K562 (cell line): ENCODE measurements at regions of chr12 and their contacts with region 1.

Region 1: DNA sequence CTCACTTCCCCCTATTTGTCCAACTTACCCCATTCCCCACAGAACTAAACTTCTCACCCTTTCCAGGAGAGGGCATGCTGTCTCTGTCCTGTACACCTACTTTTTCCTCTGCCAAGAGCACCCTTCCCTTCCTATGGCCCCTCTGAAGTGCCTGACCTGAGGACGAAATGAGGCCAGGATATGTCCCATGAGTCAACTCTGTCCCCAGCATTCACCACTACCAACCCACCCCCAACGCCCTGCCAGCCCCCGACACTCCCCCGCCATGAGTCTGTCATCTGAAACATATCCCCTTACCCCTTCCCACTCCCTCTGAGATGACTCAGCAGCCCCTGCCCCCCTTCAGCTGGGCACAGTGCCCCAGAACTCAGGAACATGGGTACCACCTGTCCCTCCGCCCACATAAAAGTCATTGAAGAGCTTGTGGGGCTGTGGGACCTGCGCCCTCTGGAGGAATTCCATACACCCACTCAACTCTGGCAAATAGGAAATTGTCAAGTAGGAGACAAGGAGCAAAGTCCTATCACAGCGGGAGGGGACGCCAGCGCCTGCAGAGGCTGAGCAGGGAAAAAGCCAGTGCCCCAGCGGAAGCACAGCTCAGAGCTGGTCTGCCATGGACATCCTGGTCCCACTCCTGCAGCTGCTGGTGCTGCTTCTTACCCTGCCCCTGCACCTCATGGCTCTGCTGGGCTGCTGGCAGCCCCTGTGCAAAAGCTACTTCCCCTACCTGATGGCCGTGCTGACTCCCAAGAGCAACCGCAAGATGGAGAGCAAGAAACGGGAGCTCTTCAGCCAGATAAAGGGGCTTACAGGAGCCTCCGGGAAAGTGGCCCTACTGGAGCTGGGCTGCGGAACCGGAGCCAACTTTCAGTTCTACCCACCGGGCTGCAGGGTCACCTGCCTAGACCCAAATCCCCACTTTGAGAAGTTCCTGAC is 26.3 kb downstream of the ITGA7 start:
- DNase-seq: peak in 3 of 4 experiments; percentile 20 to 71 (median 56)
- ATAC-seq: peak; percentile 84
- H3K4me3 ChIP-seq: peak overlapping the region; percentile 29
- H3K27ac ChIP-seq: no peak overlapping the region; the same call in 2 of the 3 replicates
- H3K4me1 ChIP-seq: peaks cover 0 to 11% of the 10 kb centered on the region in 2 experiments; a peak in 2 of 5 replicates
- H3K27me3 ChIP-seq: peaks cover 29 to 50% of the 10 kb centered on the region in 2 experiments
- CTCF ChIP-seq: peak; percentile 55 to 80 (median 64)
- EP300 ChIP-seq: no peak
- POLR2A ChIP-seq: no peak
- RAD21 ChIP-seq: peak in 1 of 2 experiments; percentile 22; a peak in 3 of 4 replicates

Region 2: DNA sequence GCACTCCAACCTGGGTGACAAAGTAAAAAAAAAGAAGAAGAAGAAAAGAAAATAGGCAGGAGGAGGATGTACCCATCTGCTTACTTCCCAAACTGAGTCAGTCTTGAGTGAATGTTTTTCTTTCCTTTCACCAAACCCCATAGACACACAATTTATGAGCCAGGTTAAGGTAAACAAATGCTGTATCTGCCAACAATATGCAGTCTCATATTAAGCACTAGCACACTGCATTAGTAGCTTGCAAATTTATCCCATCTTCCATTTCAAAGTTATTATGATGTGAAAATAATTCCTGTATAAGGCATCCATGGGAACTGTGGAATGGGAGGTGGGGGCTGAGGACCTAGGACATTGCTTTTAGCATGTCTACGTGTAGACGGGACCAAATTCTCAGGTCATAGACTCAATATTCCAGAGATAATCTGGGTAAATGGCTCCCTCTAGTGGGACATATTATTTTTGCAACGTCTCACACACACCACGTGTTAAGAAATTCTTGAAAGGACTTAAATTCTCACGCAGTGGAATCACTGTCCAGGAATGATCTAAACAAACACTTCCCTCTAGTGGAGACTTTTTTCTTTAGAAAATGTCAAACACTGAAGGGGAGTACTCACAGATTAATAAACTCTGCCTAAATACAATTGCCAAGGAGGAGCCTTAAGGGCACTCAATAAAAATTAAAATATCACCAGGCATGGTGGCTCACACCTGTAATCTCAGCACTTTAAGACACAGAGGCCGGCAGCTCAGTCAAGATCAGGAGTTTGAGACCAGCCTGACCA is 61.9 kb before region 1 on chr12:
- CTCF ChIA-PET with region 1: no interaction called
- POLR2A ChIA-PET with region 1: no interaction called
- in situ Hi-C with region 1: no loop called
- intact Hi-C with region 1: no loop called
- DNase-seq: peak; percentile 66 to 88 (median 70)
- ATAC-seq: peak; percentile 99
- H3K4me3 ChIP-seq: no peak overlapping the region
- H3K27ac ChIP-seq: no peak overlapping the region
- H3K4me1 ChIP-seq: no peaks in the 10 kb centered on the region
- H3K27me3 ChIP-seq: no peaks in the 10 kb centered on the region
- CTCF ChIP-seq: peak; percentile 81 to 98 (median 83)
- EP300 ChIP-seq: no peak
- POLR2A ChIP-seq: no peak
- RAD21 ChIP-seq: peak; percentile 96 to 98

Region 3: DNA sequence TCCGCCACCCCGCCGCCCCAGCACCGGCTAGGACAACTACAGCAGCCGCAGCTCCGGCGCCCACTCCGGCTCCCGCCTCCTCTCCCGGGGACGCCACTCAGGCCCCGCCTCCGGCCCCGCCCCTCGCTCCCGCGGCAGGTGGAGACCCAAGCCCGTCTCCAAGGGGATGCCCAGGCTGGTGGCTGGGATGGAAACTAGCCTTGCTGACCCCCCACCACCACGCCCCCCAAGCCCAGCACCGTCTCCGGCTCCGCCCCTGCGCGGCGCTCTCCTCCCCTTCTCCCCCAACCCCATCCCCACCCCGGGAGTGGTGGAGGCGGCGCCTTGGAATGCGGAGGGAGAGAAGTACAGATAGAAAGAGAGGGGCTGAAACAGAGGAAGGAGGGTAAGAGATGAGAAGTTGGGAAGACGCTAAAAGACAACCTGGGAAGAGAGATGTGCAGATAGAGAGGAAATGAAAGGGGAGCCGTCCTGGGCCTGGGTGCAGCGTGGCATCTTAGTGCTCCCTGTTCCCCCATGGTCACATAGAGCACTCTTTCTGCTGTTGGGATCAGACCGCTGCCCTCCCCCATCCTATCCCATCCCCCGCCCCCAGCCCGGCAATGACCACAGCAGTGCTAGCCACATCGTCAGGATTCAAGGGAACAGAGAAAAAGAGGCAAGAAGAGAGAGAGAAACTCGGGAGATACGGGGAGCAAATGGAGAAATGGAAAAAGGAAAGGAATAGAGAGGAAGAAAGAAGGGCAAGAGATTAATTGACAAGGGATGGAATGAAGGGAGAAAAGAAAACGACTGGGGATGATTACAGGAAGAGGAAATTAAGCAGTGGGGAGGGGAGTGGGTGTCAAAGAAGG is 26.7 kb after region 1 on chr12 and contains the start of gene ITGA7:
- CTCF ChIA-PET with region 1: no interaction called
- POLR2A ChIA-PET with region 1: interaction called, 5 read pairs
- in situ Hi-C with region 1: no loop called
- intact Hi-C with region 1: loop called (anchors 2 kb)
- DNase-seq: peak; percentile 60 to 86 (median 77)
- ATAC-seq: peak; percentile 80
- H3K4me3 ChIP-seq: peak within 1 kb of the TSS; percentile 37
- H3K27ac ChIP-seq: no peak within 1 kb of the TSS
- H3K4me1 ChIP-seq: peaks cover 13 to 18% of the 10 kb centered on the region in 2 experiments; a peak in 4 of 5 replicates
- H3K27me3 ChIP-seq: peaks cover 19 to 23% of the 10 kb centered on the region in 2 experiments
- CTCF ChIP-seq: no peak
- EP300 ChIP-seq: no peak
- POLR2A ChIP-seq: no peak
- RAD21 ChIP-seq: no peak
- polyA plus RNA-seq, gene ITGA7: 0.11 TPM in 1 of 2 experiments, not detected in the other